Activated CD4-positive, alpha-beta memory T cell treated with anti-CD3 and anti-CD28 coated beads for 36 hours (primary cell): ENCODE measurements at regions of chr12 and their contacts with region 1.

Region 1: GRCh38 chr12:6825398-6826124 is 2.6 kb upstream of the P3H3 start:
- DNase-seq: peak; percentile 90
- H3K4me3 Mint-ChIP-seq: no peak overlapping the region
- H3K27ac Mint-ChIP-seq: peak overlapping the region; percentile 16
- H3K4me1 Mint-ChIP-seq: peaks cover 30% of the 10 kb centered on the region
- H3K27me3 Mint-ChIP-seq: peaks cover 29% of the 10 kb centered on the region

Region 2: GRCh38 chr12:6613776-6614512 is 211.6 kb before region 1 on chr12:
- CTCF ChIA-PET with region 1: no interaction called
- POLR2A ChIA-PET with region 1: no interaction called
- intact Hi-C with region 1: loop called (anchors 5 kb)
- DNase-seq: peak; percentile 45
- H3K4me3 Mint-ChIP-seq: no peak overlapping the region
- H3K27ac Mint-ChIP-seq: peak overlapping the region; percentile 38
- H3K4me1 Mint-ChIP-seq: peaks cover 38% of the 10 kb centered on the region
- H3K27me3 Mint-ChIP-seq: no peaks in the 10 kb centered on the region

Region 3: GRCh38 chr12:6735448-6736191 is 89.9 kb before region 1 on chr12:
- CTCF ChIA-PET with region 1: interaction called, 8 read pairs
- POLR2A ChIA-PET with region 1: no interaction called
- intact Hi-C with region 1: loop called (anchors 1 kb)
- DNase-seq: peak; percentile 66
- H3K4me3 Mint-ChIP-seq: no peak overlapping the region
- H3K27ac Mint-ChIP-seq: no peak overlapping the region
- H3K4me1 Mint-ChIP-seq: peaks cover 4% of the 10 kb centered on the region
- H3K27me3 Mint-ChIP-seq: no peaks in the 10 kb centered on the region

Region 4: DNA sequence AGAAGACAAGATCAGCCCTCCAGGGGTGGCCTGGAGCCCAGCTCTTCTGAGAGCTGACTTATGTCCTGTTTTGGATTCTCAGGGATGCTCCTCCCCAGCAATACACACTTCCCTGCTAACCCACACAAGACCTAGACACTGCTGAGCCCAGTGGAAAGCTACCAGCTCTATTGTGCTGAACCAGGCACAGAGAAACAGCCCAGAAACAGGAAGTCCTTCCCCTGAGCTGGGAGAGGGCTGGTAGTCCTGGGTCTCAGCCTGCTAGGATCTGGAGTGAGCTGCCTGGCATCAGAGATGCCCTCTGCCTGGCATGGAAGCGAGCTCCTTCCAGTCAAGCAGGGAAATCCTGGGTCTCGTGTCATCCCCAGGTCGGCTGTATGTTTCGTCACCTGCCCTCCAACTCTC is 54.5 kb before region 1 on chr12:
- CTCF ChIA-PET with region 1: interaction called, 12 read pairs
- POLR2A ChIA-PET with region 1: no interaction called
- intact Hi-C with region 1: no loop called
- DNase-seq: peak; percentile 55
- H3K4me3 Mint-ChIP-seq: no peak overlapping the region
- H3K27ac Mint-ChIP-seq: peak overlapping the region; percentile 84
- H3K4me1 Mint-ChIP-seq: peaks cover 57% of the 10 kb centered on the region
- H3K27me3 Mint-ChIP-seq: peaks cover 13% of the 10 kb centered on the region

Region 5: GRCh38 chr12:7068240-7068993 is 242.9 kb after region 1 on chr12:
- CTCF ChIA-PET with region 1: no interaction called
- POLR2A ChIA-PET with region 1: no interaction called
- intact Hi-C with region 1: no loop called
- DNase-seq: no peak
- H3K4me3 Mint-ChIP-seq: no peak overlapping the region
- H3K27ac Mint-ChIP-seq: no peak overlapping the region
- H3K4me1 Mint-ChIP-seq: no peaks in the 10 kb centered on the region
- H3K27me3 Mint-ChIP-seq: no peaks in the 10 kb centered on the region

Region 6: GRCh38 chr12:7612851-7613250 is 787.3 kb after region 1 on chr12:
- CTCF ChIA-PET with region 1: no interaction called
- POLR2A ChIA-PET with region 1: no interaction called
- intact Hi-C with region 1: no loop called
- DNase-seq: no peak
- H3K4me3 Mint-ChIP-seq: no peak overlapping the region
- H3K27ac Mint-ChIP-seq: no peak overlapping the region
- H3K4me1 Mint-ChIP-seq: peaks cover 5% of the 10 kb centered on the region
- H3K27me3 Mint-ChIP-seq: peaks cover 15% of the 10 kb centered on the region